Activated CD4-positive, alpha-beta T cell treated with anti-CD3 and anti-CD28 coated beads, Interleukin-2, amount 10 ng/mL, durations not matched to agents 7 days and 5 days (primary cell): ENCODE measurements at regions of chr15 and their contacts with region 1.

Region 1: GRCh38 chr15:50315814-50316630 is 39.0 kb downstream of the GABPB1 start:
- DNase-seq: peak; percentile 27
- H3K4me3 Mint-ChIP-seq: no peak overlapping the region
- H3K27ac Mint-ChIP-seq: no peak overlapping the region
- H3K4me1 Mint-ChIP-seq: peaks cover 23% of the 10 kb centered on the region
- H3K27me3 Mint-ChIP-seq: no peaks in the 10 kb centered on the region

Region 2: DNA sequence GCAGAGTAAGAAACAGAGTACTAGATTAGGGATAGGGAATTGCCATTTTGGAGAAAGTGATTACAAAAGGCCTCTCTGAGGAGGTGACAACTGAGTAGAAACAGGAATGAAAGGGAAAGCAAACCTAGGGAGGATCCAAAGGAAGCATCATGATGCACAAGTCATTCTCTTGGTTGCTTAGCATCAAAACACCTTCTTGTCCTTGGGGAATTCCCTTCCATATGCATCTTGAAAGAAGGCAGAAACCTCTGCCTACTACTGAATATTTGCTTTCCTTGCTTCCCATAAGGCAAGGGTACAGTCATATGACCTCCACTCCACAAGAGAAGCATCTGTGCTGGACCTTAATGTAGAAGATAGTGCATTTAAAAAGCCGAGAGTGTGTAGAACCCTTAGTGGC is 14.9 kb after region 1 on chr15:
- CTCF ChIA-PET with region 1: interaction called, 11 read pairs
- POLR2A ChIA-PET with region 1: no interaction called
- DNase-seq: no peak
- H3K4me3 Mint-ChIP-seq: no peak overlapping the region
- H3K27ac Mint-ChIP-seq: no peak overlapping the region
- H3K4me1 Mint-ChIP-seq: peaks cover 21% of the 10 kb centered on the region
- H3K27me3 Mint-ChIP-seq: no peaks in the 10 kb centered on the region